ENCODE measurements at regions of chr7 and their contacts with region 1.

Region 1: GRCh38 chr7:28408960-28409715 is 3.2 kb upstream of the CREB5 start:
- DNase-seq: peak; percentile 95 to 97 (median 97)
- ATAC-seq: peak; percentile 80 to 90 (median 84)
- H3K4me3 ChIP-seq: peak overlapping the region; percentile 70 to 90 (median 84)
- H3K27ac ChIP-seq: peak overlapping the region; percentile 53 to 98 (median 90)
- H3K4me1 ChIP-seq: peaks cover 0 to 57% (median 25%) of the 10 kb centered on the region in 12 donors
- H3K27me3 ChIP-seq: peaks cover 0 to 28% (median 0%) of the 10 kb centered on the region in 9 donors
- CTCF ChIP-seq: no peak
- POLR2A ChIP-seq: peak; percentile 41 to 84

Region 2: DNA sequence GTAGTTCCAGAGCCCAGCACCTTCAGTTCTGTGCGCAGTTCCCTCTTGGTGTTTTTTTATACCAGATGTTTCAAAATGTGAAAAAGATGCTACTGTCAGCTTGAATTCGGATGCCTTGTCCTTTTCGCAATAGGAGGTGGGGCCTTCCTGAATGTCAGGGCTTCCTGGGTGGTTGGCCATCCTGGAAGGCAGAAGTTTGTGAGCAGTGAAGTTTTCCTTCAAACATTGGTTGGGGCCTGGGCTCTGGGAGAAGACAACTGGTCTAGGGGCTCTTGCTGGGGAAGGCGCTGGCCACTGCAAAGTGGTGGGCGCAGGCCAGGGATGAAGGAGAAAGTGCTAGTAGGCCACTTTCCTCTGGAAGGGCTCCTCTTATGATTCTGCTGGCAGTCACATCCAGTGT is 171.8 kb before region 1 on chr7:
- intact Hi-C with region 1: no loop called
- DNase-seq: peak in 1 of 5 donors; percentile 32
- ATAC-seq: no peak
- H3K4me3 ChIP-seq: no peak overlapping the region
- H3K27ac ChIP-seq: peak overlapping the region in 4 of 12 donors; percentile 0 to 49 (median 38)
- H3K4me1 ChIP-seq: peaks cover 0 to 19% (median 0%) of the 10 kb centered on the region in 12 donors
- H3K27me3 ChIP-seq: no peaks in the 10 kb centered on the region
- CTCF ChIP-seq: no peak
- POLR2A ChIP-seq: no peak

Region 3: DNA sequence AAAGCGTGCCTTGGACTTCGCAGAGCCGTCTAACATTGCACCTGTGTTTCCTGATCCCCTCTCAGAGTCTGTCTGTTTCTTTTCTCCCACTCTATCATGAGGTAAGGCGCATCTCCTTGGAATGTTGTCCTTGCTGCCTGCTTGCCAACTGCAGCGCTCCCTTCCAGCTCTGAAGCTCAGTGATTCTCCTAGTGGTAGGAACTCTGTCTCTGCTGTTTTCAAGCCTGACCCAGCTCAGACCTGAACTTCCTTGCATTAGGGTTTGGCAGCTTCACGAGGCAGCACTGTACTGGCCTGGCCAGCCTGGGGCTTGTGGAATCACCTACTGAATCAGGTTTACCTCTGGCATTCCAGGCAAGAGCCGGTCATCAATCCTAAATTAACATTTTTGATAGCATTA is 127.1 kb after region 1 on chr7:
- intact Hi-C with region 1: loop called in 3 of 10 experiments (anchors 10 kb)
- DNase-seq: no peak
- ATAC-seq: peak in 2 of 4 donors; percentile 40 to 49
- H3K4me3 ChIP-seq: no peak overlapping the region
- H3K27ac ChIP-seq: no peak overlapping the region
- H3K4me1 ChIP-seq: peaks cover 0 to 16% (median 9%) of the 10 kb centered on the region in 12 donors
- H3K27me3 ChIP-seq: no peaks in the 10 kb centered on the region
- CTCF ChIP-seq: peak in 4 of 12 donors; percentile 8 to 33 (median 20)
- POLR2A ChIP-seq: no peak

Region 4: GRCh38 chr7:28615091-28615490 is 206.0 kb after region 1 on chr7:
- intact Hi-C with region 1: loop called in 4 of 10 experiments (anchors 5 to 10 kb)
- DNase-seq: no peak
- ATAC-seq: peak in 2 of 4 donors; percentile 24 to 41
- H3K4me3 ChIP-seq: no peak overlapping the region
- H3K27ac ChIP-seq: no peak overlapping the region
- H3K4me1 ChIP-seq: peaks cover 0 to 12% (median 4%) of the 10 kb centered on the region in 12 donors
- H3K27me3 ChIP-seq: no peaks in the 10 kb centered on the region
- CTCF ChIP-seq: peak in 6 of 12 donors; percentile 17 to 42 (median 26)
- POLR2A ChIP-seq: no peak